B cell (primary cell): ENCODE measurements at regions of chr4 and their contacts with region 1.

Region 1: DNA sequence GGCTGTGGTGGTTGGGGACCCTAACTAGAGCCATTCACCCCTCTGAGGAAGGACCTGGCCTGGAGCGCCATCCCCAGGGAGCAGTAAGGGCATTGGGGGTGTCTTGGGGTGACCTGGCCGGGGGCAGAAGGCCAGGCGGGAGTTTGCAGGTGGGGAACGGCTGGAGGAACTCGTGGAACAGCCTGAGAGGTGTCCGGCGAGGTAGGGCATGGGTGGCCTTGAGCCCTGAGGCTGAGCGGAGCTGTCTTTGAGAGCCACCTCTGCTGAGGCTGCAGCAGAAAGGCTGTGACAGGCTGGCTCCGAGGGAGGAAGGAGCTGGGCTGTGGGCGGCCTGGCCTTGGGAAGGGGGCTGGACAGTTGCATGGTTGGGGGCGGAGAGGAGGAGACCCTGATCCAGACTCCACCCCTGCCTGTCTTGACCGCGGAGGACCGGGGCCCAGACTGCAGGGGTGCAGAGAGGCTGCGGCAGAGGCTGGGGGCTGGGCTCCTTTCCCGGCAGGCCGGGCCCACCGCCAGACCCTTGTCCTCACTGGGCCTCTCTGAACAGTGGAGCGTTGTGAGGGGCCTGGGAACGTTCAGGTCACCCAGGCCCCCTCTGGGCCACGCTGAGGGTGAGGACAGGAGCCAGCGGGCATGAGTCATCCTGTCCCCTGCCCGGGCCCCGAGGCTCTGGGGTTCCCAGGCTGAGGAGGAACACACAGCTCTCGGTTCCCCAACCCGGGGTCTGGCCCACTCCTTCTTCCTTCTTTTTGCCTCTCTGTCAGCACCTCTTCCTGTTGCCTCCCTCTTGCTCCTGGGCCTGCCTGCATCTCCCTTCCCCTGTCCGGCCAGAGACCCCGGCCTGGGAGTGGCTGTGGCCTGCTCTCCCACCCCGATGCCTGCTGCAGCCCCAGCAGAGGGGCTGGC is 8.1 kb downstream of the SH3BP2 start:
- DNase-seq: peak; percentile 74
- ATAC-seq: peak; percentile 70
- H3K4me3 ChIP-seq: peak overlapping the region; percentile 12 to 67 (median 59)
- H3K4me3 Mint-ChIP-seq: peak overlapping the region; percentile 78
- H3K27ac ChIP-seq: peak overlapping the region; percentile 76 to 83
- H3K27ac Mint-ChIP-seq: peak overlapping the region; percentile 86
- H3K4me1 ChIP-seq: peaks cover 81 to 95% of the 10 kb centered on the region in 2 donors
- H3K4me1 Mint-ChIP-seq: peaks cover 71% of the 10 kb centered on the region
- H3K27me3 ChIP-seq: no peaks in the 10 kb centered on the region
- H3K27me3 Mint-ChIP-seq: no peaks in the 10 kb centered on the region
- CTCF ChIP-seq: no peak

Region 2: DNA sequence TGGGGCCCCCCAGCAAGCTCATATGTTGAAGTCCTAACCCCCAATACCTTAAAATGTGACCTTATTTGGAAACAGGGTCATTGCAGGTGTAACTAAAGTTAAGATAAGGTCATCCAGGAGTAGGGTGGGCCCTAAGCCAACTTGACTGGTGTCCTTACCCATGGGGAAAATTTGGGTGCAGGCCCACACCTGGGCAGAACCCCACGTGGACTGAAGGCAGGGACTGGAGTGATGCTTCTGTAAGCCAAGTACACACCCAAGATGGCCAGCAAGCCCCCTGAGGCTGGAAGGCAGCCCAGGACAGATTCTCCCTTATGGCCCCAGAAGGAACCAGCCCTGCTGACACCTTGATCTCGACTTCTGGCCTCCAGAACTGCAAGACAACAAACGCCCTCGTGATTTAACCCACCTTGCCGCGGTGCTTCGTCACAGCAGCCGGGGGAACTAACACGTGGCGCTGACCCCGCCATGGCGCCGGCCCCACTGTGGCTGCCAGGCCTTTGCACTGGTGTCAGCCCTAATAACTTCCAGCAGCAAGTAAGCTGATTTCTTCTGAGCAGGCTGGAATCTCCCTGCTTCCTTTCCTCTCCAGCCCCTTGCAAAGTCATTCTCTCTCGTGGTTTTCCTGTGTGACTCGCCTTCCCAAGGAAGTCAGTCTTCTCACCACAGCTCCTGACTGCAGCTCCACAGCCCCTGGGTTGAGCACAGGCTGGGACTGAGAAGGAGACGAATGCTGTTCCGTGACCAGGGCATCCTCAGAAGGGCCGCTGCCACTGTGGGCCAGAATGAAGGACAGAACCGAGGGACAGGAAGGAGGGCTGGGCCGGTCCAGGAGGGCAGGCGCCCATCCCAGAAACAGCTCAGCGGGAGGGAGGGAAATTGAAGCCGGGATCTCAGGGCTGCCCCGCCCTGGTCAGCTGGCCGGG is 515.7 kb before region 1 on chr4:
- CTCF ChIA-PET with region 1: no interaction called
- POLR2A ChIA-PET with region 1: no interaction called
- intact Hi-C with region 1: no loop called
- DNase-seq: no peak
- ATAC-seq: no peak
- H3K4me3 ChIP-seq: no peak overlapping the region
- H3K4me3 Mint-ChIP-seq: no peak overlapping the region
- H3K27ac ChIP-seq: no peak overlapping the region
- H3K27ac Mint-ChIP-seq: peak overlapping the region; percentile 46
- H3K4me1 ChIP-seq: peaks cover 25% of the 10 kb centered on the region in 2 donors
- H3K4me1 Mint-ChIP-seq: peaks cover 34% of the 10 kb centered on the region
- H3K27me3 ChIP-seq: peaks cover 0 to 4% (median 0%) of the 10 kb centered on the region in 4 experiments
- H3K27me3 Mint-ChIP-seq: no peaks in the 10 kb centered on the region
- CTCF ChIP-seq: no peak

Region 3: DNA sequence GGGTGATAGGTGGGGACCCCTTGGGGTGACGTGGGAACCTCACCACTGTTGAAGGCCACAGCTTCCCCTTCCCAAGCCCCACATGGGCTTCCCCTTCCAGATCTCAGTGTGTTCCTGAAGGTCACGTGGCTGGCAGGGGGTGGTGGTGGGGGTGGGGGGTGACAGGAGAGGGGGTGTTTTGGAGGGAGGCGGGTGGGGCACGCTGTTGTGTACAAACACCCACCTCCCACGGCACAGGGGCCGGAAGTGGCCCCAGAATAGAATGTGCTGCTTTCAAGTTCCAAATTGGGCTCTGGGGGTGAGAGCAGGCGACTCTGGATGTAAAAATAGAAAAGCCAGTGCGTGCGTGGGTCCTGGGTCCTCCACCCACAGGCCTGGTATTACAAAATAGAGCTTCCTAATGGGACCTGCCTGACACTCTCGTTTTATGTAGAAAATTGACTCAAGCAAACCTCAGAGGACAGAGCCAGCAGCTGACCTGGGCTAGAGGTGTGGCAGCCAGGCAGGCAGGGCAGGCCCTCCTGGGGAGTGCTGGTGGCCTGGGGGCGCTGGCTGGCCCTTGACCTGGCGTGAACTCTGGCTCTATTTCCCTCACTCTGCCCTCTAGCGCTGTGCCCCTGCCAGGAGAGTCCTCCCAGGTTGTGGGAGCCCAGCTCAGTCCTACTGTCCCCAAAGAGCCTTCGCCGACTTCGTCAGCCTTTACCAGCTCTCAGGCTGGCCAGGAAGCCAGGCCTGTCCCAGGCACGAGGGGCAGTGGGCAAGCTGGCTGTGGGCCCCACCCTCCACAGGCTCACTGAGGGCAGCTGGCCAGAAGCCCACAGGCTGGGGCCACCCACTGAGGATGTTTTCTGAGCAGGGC is 13.5 kb before region 1 on chr4:
- CTCF ChIA-PET with region 1: interaction called, 4 read pairs
- POLR2A ChIA-PET with region 1: interaction called, 10 read pairs
- intact Hi-C with region 1: no loop called
- DNase-seq: peak; percentile 90
- ATAC-seq: peak; percentile 52
- H3K4me3 ChIP-seq: peak overlapping the region in 2 of 5 experiments; percentile 10 to 20
- H3K4me3 Mint-ChIP-seq: peak overlapping the region; percentile 74
- H3K27ac ChIP-seq: peak overlapping the region; percentile 99
- H3K27ac Mint-ChIP-seq: peak overlapping the region; percentile 94
- H3K4me1 ChIP-seq: peaks cover 67 to 72% of the 10 kb centered on the region in 2 donors
- H3K4me1 Mint-ChIP-seq: peaks cover 70% of the 10 kb centered on the region
- H3K27me3 ChIP-seq: no peaks in the 10 kb centered on the region
- H3K27me3 Mint-ChIP-seq: no peaks in the 10 kb centered on the region
- CTCF ChIP-seq: no peak